A673 (cell line): ENCODE measurements at regions of chr1 and their contacts with region 1.

Region 1: DNA sequence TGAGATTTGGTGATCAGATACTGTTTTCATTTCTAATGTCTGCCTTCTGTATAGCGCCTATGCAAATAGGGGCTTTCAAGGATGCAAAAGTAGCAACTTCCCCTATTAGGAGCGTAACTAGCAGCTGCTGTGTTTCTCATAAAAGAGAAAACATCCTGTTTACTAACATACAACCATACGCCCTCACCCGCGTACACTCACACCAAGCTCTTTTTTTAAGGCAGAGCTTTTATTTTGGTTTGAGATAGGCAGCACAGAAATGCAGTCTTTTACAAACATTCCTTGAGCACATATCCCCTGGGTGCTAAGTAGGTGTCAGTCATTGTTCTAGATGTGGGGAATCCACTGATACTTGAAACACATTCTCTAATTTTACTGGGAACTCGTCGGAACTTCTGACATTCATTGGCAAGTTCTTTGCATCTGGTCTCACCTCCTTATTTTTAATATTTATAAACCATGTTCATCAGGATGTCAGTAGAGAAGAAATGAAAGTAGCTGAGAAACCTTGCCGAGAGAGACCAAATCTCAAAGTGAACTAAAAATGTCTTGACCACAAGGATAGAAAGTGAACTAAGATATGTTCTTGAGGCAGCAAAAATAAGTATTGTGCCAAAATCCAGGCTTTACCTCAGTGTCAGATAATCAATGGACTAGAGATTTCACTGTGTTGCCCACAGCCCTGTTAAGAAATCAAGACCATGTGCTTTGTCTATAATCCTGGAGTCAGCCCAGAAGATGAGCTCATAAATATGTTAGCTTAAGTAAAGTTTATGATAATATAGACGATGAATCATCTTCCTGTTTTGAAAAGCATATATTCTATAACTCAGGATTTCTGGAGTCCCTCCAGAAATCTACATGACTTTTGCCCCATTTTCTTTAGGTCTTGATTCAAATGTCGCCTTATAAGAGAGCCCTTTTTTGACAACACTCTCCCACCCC is 350.9 kb downstream of the ST6GALNAC3 start:
- DNase-seq: peak; percentile 75
- H3K4me3 ChIP-seq: peak overlapping the region; percentile 5
- H3K27ac ChIP-seq: peak overlapping the region; percentile 3
- H3K4me1 ChIP-seq: peaks cover 8% of the 10 kb centered on the region
- H3K27me3 ChIP-seq: no peaks in the 10 kb centered on the region
- CTCF ChIP-seq: no peak

Region 2: DNA sequence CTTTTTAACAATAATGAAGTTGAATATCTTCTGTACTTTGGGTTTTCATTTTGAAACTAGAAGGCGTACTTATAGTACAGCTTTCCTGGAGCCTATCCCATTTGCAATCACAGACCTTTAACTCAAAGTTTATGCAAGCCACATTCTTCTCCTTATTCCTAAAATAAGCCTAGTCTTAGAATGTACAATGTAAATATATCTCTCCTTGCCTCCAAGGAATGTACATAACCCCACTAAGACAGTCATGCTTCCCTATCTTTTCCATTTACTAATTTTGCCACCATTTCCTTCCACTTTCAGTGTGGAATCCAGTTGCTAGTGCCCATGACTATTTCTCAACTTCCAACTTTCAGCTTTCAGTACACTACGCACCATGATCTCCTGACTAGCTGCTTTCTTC is 23.3 kb before region 1 on chr1:
- CTCF ChIA-PET with region 1: no interaction called
- POLR2A ChIA-PET with region 1: no interaction called
- intact Hi-C with region 1: loop called (anchors 2 kb)
- DNase-seq: no peak
- H3K4me3 ChIP-seq: no peak overlapping the region
- H3K27ac ChIP-seq: no peak overlapping the region
- H3K4me1 ChIP-seq: no peaks in the 10 kb centered on the region
- H3K27me3 ChIP-seq: no peaks in the 10 kb centered on the region
- CTCF ChIP-seq: no peak